ENCODE measurements at regions of chr14 and their contacts with region 1.

Region 1: DNA sequence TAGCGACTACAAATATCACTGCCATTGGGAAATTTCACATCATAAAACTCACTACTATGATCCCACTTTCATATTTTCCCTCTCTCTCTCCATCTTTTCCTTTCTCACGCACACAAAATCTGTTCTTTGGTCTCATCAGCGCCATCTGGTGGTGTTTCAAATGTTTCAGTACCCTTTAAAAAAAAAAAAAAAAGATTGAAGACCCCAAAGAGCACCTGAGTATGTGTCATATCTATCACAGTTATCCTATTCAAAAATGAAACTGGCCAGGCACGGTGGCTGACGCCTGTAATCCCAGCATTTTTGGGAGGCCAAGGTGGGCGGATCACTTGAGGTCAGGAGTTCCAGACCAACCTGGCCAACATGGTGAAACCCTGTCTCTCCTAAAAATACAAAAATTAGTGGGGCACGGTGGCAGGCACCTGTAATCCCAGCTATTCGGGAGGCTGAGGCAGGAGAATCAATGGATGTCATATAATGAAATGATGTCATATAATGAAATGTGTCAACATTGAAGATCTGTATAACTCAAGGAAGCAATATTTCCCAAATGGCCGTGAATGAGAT is 72.4 kb downstream of the TTC9 start:
- ATAC-seq: peak in 2 of 8 experiments; percentile 19
- H3K4me3 ChIP-seq: no peak overlapping the region
- H3K27ac ChIP-seq: no peak overlapping the region
- H3K4me1 ChIP-seq: peaks cover 0 to 8% of the 10 kb centered on the region in 2 donors

Region 2: GRCh38 chr14:70622111-70622712 is 91.9 kb before region 1 on chr14:
- in situ Hi-C with region 1: loop called in 2 of 9 experiments (anchors 10 kb)
- ATAC-seq: peak in 3 of 8 experiments; percentile 73 to 88 (median 75)
- H3K4me3 ChIP-seq: no peak overlapping the region
- H3K27ac ChIP-seq: no peak overlapping the region
- H3K4me1 ChIP-seq: no peaks in the 10 kb centered on the region

Region 3: GRCh38 chr14:70995676-70996075 is 281.5 kb after region 1 on chr14:
- in situ Hi-C with region 1: no loop called
- ATAC-seq: peak in 3 of 8 experiments; percentile 42 to 100 (median 53)
- H3K4me3 ChIP-seq: no peak overlapping the region
- H3K27ac ChIP-seq: no peak overlapping the region
- H3K4me1 ChIP-seq: no peaks in the 10 kb centered on the region

Measured in motor neuron (in vitro differentiated cells).